ENCODE measurements at regions of chr19 and their contacts with region 1.

Region 1: DNA sequence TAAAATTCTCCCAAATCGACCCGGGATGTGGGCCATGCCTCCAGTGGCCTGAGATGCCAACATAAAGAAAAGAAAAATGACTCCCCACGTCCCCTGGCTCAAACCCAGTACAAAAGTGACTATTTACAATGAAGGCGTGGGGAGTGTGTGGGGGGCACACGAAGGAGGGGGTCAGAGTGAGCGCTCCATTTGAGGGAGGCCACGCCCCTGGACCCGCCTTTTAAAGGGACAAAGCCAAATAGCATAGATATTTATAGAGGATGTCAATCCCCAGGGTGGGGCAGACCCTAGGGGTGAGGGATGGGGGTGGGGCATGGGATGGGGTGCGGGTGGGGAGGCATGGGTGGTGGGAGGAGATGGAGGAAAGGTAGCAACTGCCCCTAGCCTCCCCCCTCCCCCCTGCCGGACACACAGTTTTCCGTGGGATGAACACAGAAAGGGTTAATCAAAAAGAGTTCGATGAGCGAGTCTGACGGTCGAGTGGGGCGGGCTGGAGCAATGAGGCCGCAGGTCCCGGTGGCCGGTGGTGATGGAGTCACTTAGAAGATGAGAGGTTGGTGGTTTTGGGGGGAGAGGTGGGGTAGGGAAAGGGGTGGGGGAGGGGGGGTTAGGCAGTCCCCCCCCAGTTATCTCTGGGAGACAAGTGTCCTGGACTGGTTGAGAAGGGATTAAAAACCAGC is 20.1 kb upstream of the NANOS2 start:
- DNase-seq: no peak
- ATAC-seq: peak in 1 of 2 experiments; percentile 31; a peak in 1 of 6 replicates
- H3K4me3 ChIP-seq: no peak overlapping the region
- H3K27ac ChIP-seq: no peak overlapping the region
- H3K4me1 ChIP-seq: peaks cover 11% of the 10 kb centered on the region; the same call in 1 of the 3 replicates
- CTCF ChIP-seq: no peak
- EP300 ChIP-seq: no peak
- POLR2A ChIP-seq: no peak
- RAD21 ChIP-seq: no peak

Region 2: GRCh38 chr19:45809643-45810159 is 125.0 kb before region 1 on chr19:
- CTCF ChIA-PET with region 1: no interaction called
- POLR2A ChIA-PET with region 1: no interaction called
- DNase-seq: peak in 1 of 2 experiments; percentile 68
- ATAC-seq: peak in 1 of 2 experiments; percentile 19; a peak in 3 of 6 replicates
- H3K4me3 ChIP-seq: no peak overlapping the region
- H3K27ac ChIP-seq: peak overlapping the region; percentile 64 to 84
- H3K4me1 ChIP-seq: peaks cover 14% of the 10 kb centered on the region
- CTCF ChIP-seq: no peak
- EP300 ChIP-seq: no peak
- POLR2A ChIP-seq: no peak
- RAD21 ChIP-seq: no peak

Region 3: GRCh38 chr19:45848922-45849321 is 85.8 kb before region 1 on chr19:
- CTCF ChIA-PET with region 1: no interaction called
- POLR2A ChIA-PET with region 1: no interaction called
- DNase-seq: peak; percentile 48 to 69
- ATAC-seq: peak; percentile 72 to 84
- H3K4me3 ChIP-seq: no peak overlapping the region
- H3K27ac ChIP-seq: no peak overlapping the region
- H3K4me1 ChIP-seq: no peaks in the 10 kb centered on the region
- CTCF ChIP-seq: no peak
- EP300 ChIP-seq: no peak
- POLR2A ChIP-seq: no peak
- RAD21 ChIP-seq: no peak

Region 4: GRCh38 chr19:45906221-45906620 is 28.5 kb before region 1 on chr19:
- CTCF ChIA-PET with region 1: no interaction called
- POLR2A ChIA-PET with region 1: no interaction called
- DNase-seq: no peak
- ATAC-seq: no peak
- H3K4me3 ChIP-seq: no peak overlapping the region
- H3K27ac ChIP-seq: no peak overlapping the region
- H3K4me1 ChIP-seq: peaks cover 10% of the 10 kb centered on the region
- CTCF ChIP-seq: no peak
- EP300 ChIP-seq: no peak
- POLR2A ChIP-seq: no peak
- RAD21 ChIP-seq: no peak

Region 5: GRCh38 chr19:45947926-45948325 is 13.2 kb after region 1 on chr19:
- CTCF ChIA-PET with region 1: interaction called, 18 read pairs
- POLR2A ChIA-PET with region 1: interaction called, 5 read pairs
- DNase-seq: no peak
- ATAC-seq: no peak
- H3K4me3 ChIP-seq: no peak overlapping the region
- H3K27ac ChIP-seq: no peak overlapping the region
- H3K4me1 ChIP-seq: peaks cover 5% of the 10 kb centered on the region
- CTCF ChIP-seq: no peak
- EP300 ChIP-seq: no peak
- POLR2A ChIP-seq: no peak
- RAD21 ChIP-seq: no peak

Region 6: DNA sequence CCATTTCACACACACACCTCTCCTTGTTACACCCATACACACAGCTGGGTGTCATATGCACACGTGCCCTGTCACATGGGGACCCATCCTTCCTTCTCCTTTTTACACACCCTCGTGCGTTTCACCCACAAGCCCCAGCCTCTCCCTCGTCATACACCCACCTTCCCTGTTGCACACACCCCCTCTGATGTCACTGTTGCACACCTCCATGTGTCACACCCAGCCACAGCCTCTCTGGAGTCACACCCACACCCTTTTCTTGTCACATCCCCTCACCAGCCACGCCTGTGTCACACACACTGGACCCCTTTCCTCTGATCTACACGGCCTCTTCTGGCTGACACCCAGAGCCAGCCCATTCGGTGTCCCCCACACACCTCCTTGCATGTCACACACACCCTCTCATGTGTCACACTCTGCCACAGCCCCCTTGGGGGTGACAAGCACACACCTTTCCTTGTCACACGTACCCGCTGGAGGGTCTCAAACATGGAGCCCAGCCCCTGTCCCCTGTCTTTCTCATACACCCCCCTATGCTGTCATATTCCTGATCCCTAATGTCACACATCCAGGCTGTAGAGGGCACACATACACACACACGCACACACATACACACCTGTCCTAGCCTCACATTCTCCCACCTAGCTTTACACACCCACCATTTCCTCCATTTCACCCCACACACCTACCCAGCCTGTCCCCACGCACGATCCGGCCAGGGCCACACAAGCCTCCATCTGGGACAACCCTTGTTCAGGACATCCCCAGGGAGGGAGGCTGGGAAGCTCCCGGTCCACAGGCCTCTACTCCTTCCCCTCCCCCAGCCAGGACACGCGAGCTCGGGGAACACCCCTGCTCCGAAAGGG is 37.6 kb after region 1 on chr19:
- CTCF ChIA-PET with region 1: no interaction called
- POLR2A ChIA-PET with region 1: no interaction called
- DNase-seq: no peak
- ATAC-seq: peak; percentile 3 to 9; a peak in 3 of 6 replicates
- H3K4me3 ChIP-seq: peak overlapping the region; percentile 55; the same call in 2 of the 3 replicates
- H3K27ac ChIP-seq: peak overlapping the region in 1 of 2 experiments; percentile 71; a peak in 2 of 6 replicates
- H3K4me1 ChIP-seq: peaks cover 17% of the 10 kb centered on the region; the same call in 2 of the 3 replicates
- CTCF ChIP-seq: no peak
- EP300 ChIP-seq: no peak
- POLR2A ChIP-seq: no peak
- RAD21 ChIP-seq: no peak